ENCODE measurements at regions of chr1 and their contacts with region 1.

Region 1: GRCh38 chr1:58546520-58547308 is at the start of gene OMA1:
- DNase-seq: peak; percentile 97
- H3K4me3 Mint-ChIP-seq: peak within 1 kb of the TSS; percentile 85
- H3K27ac Mint-ChIP-seq: peak within 1 kb of the TSS; percentile 94
- H3K4me1 Mint-ChIP-seq: peaks cover 28% of the 10 kb centered on the region
- H3K27me3 Mint-ChIP-seq: no peaks in the 10 kb centered on the region
- CTCF ChIP-seq: peak; percentile 95
- total RNA-seq, gene OMA1: 25.4 and 35.2 TPM in 2 replicates

Region 2: DNA sequence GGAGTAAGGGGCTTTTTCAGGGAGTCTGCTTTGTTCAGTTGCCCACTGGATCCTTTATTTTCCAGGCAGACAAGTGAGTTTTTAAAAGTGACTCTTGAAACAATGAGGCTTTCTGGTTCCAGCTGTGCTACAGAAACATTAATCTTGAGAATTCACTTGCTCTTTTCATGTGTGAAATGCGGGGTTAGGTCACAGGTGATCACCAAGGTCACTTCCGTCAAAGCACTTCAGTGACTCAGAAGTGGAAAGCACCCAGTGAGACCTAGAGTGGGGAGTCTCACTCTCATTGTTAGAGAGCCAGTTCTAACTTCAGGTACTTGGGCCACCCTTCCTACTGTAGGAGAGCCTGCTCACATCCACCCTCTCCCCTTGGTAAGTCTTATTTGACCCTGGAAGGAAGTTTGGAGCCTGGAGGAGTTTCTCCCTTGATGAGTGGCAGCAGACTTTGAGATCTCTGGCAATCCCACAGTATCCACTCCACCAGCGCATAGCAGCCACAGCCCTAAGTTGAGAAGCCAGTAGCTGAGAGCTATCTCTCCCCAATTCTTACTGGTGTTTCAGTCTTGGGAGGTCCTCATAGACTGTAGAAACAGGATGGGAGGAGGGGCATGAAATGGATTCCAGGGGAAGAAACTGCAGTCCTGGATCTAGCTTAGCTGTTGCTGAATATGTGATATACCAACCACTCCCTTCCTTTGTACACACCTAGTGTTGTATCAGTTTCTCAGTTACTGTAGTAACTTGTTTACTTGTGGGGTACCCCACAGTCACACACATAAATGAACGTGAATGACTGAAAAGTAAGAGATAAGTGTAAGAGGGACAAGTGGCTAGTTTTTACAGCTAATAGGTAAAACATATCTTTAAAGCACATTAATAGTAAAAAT is 27.2 kb after region 1 on chr1:
- CTCF ChIA-PET with region 1: interaction called, 3 read pairs
- intact Hi-C with region 1: loop called (anchors 2 kb)
- DNase-seq: peak; percentile 50
- H3K4me3 Mint-ChIP-seq: peak overlapping the region; percentile 100
- H3K27ac Mint-ChIP-seq: peak overlapping the region; percentile 97
- H3K4me1 Mint-ChIP-seq: peaks cover 56% of the 10 kb centered on the region
- H3K27me3 Mint-ChIP-seq: no peaks in the 10 kb centered on the region
- CTCF ChIP-seq: no peak

Region 3: GRCh38 chr1:59767119-59767518 is 1220.4 kb after region 1 on chr1:
- CTCF ChIA-PET with region 1: no interaction called
- intact Hi-C with region 1: loop called (anchors 10 kb)
- DNase-seq: no peak
- H3K4me3 Mint-ChIP-seq: no peak overlapping the region
- H3K27ac Mint-ChIP-seq: no peak overlapping the region
- H3K4me1 Mint-ChIP-seq: peaks cover 8% of the 10 kb centered on the region
- H3K27me3 Mint-ChIP-seq: no peaks in the 10 kb centered on the region
- CTCF ChIP-seq: no peak